Activated T-helper 1 cell treated with anti-CD3 and anti-CD28 coated beads, Interleukin-12 subunit alpha, Interleukin-12 subunit beta, Interleukin-2, Interleukin-4 antibody, amounts not matched to agents 30 ng/mL and 10 ng/mL and 1 ng/mL, durations not matched to agents 14 hours and 24 hours and 36 hours (primary cell): ENCODE measurements at regions of chr3 and their contacts with region 1.

Region 1: DNA sequence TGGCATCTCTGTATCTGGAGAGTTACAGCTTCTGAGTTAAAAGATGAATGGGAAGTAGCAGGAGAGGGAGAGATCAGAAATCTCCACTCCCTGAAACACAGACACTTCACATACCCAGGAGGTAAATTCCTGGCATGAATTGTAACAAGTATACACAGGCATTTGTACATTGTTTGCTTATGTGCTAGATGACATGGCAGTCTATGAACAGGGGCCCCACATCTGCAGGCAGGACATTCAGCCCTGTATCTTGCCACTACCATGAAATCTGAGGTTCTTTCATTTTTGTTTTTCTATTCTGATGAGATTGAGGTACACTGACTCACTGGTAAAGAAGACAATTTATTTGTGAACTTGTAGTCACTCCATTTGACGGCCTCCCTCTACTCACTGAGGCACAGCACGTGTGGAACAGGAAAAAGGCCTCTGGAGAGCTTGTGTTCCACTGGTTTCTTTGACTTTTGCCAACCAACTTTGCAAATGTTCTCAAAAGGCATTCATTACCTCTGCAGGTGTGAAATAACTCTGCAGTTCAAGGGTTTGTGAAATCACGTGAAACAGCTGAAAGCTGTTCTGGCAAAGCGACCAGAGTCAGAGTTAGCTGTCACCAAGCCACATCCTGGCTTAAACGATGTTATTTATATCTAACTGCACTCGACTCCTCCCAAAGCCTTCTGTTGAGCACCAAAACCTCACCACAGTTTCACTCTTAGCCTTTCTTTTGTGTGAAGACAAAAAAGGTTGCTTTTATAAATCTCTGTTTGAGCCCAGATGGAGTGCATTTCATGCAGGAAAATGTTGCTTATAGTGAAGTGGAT is 401.3 kb upstream of the CFAP20DC start:
- DNase-seq: peak; percentile 74
- H3K4me3 Mint-ChIP-seq: peak overlapping the region; percentile 65
- H3K27ac Mint-ChIP-seq: peak overlapping the region; percentile 97
- H3K4me1 Mint-ChIP-seq: peaks cover 81% of the 10 kb centered on the region
- H3K27me3 Mint-ChIP-seq: no peaks in the 10 kb centered on the region

Region 2: GRCh38 chr3:59192473-59192872 is 258.7 kb before region 1 on chr3:
- intact Hi-C with region 1: no loop called
- DNase-seq: no peak
- H3K4me3 Mint-ChIP-seq: no peak overlapping the region
- H3K27ac Mint-ChIP-seq: no peak overlapping the region
- H3K4me1 Mint-ChIP-seq: no peaks in the 10 kb centered on the region
- H3K27me3 Mint-ChIP-seq: peaks cover 10% of the 10 kb centered on the region

Region 3: GRCh38 chr3:59235634-59236012 is 215.5 kb before region 1 on chr3:
- intact Hi-C with region 1: loop called (anchors 1 kb)
- DNase-seq: peak; percentile 37
- H3K4me3 Mint-ChIP-seq: peak overlapping the region; percentile 58
- H3K27ac Mint-ChIP-seq: peak overlapping the region; percentile 27
- H3K4me1 Mint-ChIP-seq: peaks cover 29% of the 10 kb centered on the region
- H3K27me3 Mint-ChIP-seq: peaks cover 6% of the 10 kb centered on the region

Region 4: DNA sequence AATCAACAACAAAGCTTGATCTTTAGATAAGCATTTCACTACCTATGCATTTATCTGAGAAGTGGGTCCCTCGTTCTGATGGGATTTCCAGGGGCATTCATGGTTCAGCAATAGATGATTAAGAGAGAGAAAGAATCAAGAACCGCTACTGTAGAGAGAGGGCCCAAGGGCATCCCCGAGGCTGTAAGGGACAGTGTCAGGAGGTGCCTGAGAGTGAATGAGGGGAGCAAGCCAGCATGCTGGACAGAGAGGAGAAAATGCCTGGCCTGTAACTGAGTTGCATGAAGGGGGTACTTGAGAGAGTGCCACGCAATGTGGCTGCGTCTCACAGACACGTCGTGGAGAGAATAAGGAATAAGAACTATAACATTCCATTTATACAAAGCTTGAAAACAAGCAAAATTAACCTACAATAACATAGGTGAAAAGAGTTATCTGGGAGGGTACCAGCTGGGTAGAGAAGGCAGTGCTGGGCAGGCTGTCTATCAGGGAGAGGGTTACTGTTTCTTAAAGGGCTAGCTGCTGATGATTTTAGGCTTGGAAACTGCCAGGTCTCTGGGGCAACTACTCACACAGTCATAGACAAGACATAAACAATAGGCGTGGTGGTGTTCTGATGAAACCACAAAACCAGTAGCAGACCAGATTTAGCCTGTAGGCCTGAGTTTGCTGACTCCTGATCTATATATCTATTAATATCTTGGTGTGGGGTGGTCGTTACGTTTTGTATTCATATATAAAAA is 26.7 kb before region 1 on chr3:
- intact Hi-C with region 1: loop called (anchors 1 kb)
- DNase-seq: no peak
- H3K4me3 Mint-ChIP-seq: no peak overlapping the region
- H3K27ac Mint-ChIP-seq: peak overlapping the region; percentile 3
- H3K4me1 Mint-ChIP-seq: peaks cover 52% of the 10 kb centered on the region
- H3K27me3 Mint-ChIP-seq: no peaks in the 10 kb centered on the region

Region 5: DNA sequence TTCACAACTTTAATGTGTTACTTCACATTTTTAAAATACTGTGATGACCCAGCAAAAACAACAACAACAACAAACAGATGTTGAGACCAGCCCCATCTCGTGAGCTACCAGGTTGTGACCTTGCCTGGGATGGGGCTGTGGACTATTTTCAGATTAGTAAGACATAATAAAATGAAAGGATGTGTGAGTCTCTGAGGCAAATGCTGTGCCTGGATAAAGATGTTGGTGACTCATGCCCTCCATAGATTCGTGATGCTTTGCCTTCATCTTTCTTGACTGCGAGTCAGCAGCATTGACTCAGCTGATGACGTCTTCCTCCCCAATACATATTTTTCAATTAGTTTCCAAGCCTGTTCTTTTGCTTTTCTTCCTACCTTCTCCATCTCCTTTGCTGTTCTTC is 51.7 kb after region 1 on chr3:
- intact Hi-C with region 1: loop called (anchors 1 kb)
- DNase-seq: no peak
- H3K4me3 Mint-ChIP-seq: no peak overlapping the region
- H3K27ac Mint-ChIP-seq: peak overlapping the region; percentile 21
- H3K4me1 Mint-ChIP-seq: peaks cover 16% of the 10 kb centered on the region
- H3K27me3 Mint-ChIP-seq: no peaks in the 10 kb centered on the region

Region 6: GRCh38 chr3:59559721-59560435 is 108.7 kb after region 1 on chr3:
- intact Hi-C with region 1: loop called (anchors 1 kb)
- DNase-seq: no peak
- H3K4me3 Mint-ChIP-seq: no peak overlapping the region
- H3K27ac Mint-ChIP-seq: peak overlapping the region; percentile 88
- H3K4me1 Mint-ChIP-seq: peaks cover 24% of the 10 kb centered on the region
- H3K27me3 Mint-ChIP-seq: no peaks in the 10 kb centered on the region

Region 7: DNA sequence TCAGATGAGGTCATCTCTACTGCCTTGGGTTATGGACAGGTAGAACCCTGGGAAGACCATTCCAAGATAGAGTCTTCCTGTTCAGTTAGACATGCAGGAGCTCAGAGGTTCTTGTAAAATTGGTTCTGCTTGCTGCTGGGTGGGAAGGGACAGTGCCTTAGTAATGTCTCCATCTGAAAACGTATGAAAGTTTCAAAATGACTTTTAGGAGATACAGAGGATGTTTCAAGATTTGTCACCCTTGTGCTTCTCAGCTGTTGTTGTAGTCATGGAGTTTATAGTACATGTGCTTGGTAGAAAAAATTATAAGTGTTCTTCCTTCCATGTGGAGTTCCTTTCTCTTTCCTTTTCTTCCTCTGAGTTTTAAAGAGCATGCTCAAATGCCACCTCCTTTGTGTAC is 483.9 kb after region 1 on chr3:
- intact Hi-C with region 1: loop called (anchors 1 kb)
- DNase-seq: peak; percentile 6
- H3K4me3 Mint-ChIP-seq: peak overlapping the region; percentile 54
- H3K27ac Mint-ChIP-seq: peak overlapping the region; percentile 82
- H3K4me1 Mint-ChIP-seq: peaks cover 43% of the 10 kb centered on the region
- H3K27me3 Mint-ChIP-seq: no peaks in the 10 kb centered on the region

Region 8: GRCh38 chr3:59946401-59946800 is 495.2 kb after region 1 on chr3:
- intact Hi-C with region 1: no loop called
- DNase-seq: no peak
- H3K4me3 Mint-ChIP-seq: no peak overlapping the region
- H3K27ac Mint-ChIP-seq: no peak overlapping the region
- H3K4me1 Mint-ChIP-seq: peaks cover 1% of the 10 kb centered on the region
- H3K27me3 Mint-ChIP-seq: no peaks in the 10 kb centered on the region

Region 9: GRCh38 chr3:60086811-60087210 is 635.7 kb after region 1 on chr3:
- intact Hi-C with region 1: loop called (anchors 10 kb)
- DNase-seq: peak; percentile 54
- H3K4me3 Mint-ChIP-seq: peak overlapping the region; percentile 53
- H3K27ac Mint-ChIP-seq: peak overlapping the region; percentile 96
- H3K4me1 Mint-ChIP-seq: peaks cover 69% of the 10 kb centered on the region
- H3K27me3 Mint-ChIP-seq: no peaks in the 10 kb centered on the region